ENCODE measurements at regions of chr10 and their contacts with region 1.

Region 1: GRCh38 chr10:122565728-122566206 is 5.2 kb downstream of the DMBT1 start:
- DNase-seq: peak; percentile 41
- H3K4me3 ChIP-seq: peak overlapping the region; percentile 10; the same call in 1 of the 2 replicates
- CTCF ChIP-seq: peak; percentile 80

Region 2: DNA sequence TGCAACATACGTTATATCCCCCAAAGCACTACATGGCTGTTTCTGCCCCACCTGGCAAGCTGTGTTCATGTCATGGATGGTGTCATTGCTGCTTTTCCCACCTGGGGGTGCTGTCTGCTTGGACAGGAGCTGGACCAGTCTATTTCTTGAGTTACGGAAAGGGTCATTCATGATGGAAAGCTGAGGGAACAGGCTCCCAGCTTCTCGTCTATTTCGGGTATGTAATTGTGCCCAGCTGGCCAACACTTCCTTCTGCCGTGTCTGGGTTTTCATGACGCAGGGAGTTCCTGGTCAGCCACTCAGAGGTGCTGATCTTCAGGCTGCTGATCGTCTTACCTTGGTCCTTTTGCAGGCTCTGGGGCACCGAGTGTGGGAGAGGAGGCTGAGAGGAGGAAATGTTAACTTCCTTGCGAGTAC is 286.0 kb before region 1 on chr10:
- CTCF ChIA-PET with region 1: interaction called, 15 read pairs
- POLR2A ChIA-PET with region 1: no interaction called
- DNase-seq: no peak
- H3K4me3 ChIP-seq: no peak overlapping the region
- CTCF ChIP-seq: peak; percentile 73

Region 3: GRCh38 chr10:122342293-122343134 is 223.3 kb before region 1 on chr10:
- CTCF ChIA-PET with region 1: interaction called, 50 read pairs
- POLR2A ChIA-PET with region 1: no interaction called
- DNase-seq: peak; percentile 5
- H3K4me3 ChIP-seq: no peak overlapping the region
- CTCF ChIP-seq: peak; percentile 60

Region 4: GRCh38 chr10:122435212-122435827 is 130.4 kb before region 1 on chr10:
- CTCF ChIA-PET with region 1: interaction called, 65 read pairs
- POLR2A ChIA-PET with region 1: no interaction called
- DNase-seq: no peak
- H3K4me3 ChIP-seq: no peak overlapping the region
- CTCF ChIP-seq: no peak

Region 5: GRCh38 chr10:122468926-122469781 is 96.6 kb before region 1 on chr10:
- CTCF ChIA-PET with region 1: interaction called, 29 read pairs
- POLR2A ChIA-PET with region 1: no interaction called
- DNase-seq: peak; percentile 97
- H3K4me3 ChIP-seq: no peak overlapping the region
- CTCF ChIP-seq: no peak

Region 6: GRCh38 chr10:122548407-122549085 is 17.2 kb before region 1 on chr10:
- CTCF ChIA-PET with region 1: interaction called, 12 read pairs
- POLR2A ChIA-PET with region 1: no interaction called
- DNase-seq: no peak
- H3K4me3 ChIP-seq: no peak overlapping the region
- CTCF ChIP-seq: no peak

Measured in AG04449 (cell line).